ENCODE measurements at regions of chr3 and their contacts with region 1.

Region 1: DNA sequence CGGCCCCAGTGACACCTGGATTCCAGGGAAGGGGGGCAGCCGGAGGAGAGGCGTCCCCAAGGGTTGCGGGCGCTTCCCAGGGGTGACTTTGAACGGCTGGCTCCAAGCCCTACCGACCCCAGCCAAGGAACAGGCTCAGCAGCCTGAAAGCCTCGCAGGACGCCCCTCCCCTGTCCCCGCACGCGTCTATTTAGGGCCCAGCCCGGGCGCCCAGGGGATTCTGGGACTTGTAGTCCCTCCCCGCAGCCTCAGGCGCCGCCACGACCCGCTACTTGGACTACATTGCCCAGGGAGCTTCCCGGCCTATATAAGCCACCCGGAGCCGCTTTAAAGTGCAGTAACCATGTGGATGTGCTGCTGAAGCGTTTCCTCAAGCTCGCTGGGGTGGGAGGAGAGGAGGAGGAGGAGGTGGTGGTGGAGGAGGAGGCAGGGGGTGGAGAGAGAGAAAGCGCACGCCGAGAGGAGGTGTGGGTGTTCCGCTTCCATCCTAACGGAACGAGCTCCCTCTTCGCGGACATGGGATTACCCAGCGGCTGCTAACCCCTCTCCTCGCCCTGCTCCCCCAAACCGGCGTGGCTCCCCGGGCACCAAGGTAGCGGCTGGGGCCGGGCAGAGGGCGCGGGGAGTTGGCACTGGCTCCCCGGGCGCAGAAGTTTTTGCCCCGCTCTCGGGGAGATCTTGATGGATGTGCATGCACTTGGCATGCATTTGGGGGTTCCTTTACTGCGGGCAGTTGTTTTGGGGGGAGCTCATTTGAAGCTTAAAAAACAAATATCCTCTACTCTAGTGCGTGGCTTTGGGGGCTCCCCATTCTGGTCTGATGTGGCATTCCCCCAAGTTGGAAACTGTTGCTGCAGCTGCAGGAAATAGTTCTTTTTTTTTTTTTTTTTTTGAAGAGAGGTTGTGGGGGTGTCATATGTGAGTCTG is at the start of gene ITPR1:
- DNase-seq: peak; percentile 97 to 100 (median 98)
- ATAC-seq: peak; percentile 93
- H3K4me3 ChIP-seq: peak within 1 kb of the TSS; percentile 61
- H3K27ac ChIP-seq: peak within 1 kb of the TSS; percentile 52
- H3K4me1 ChIP-seq: peaks cover 17 to 25% of the 10 kb centered on the region in 2 experiments
- H3K27me3 ChIP-seq: no peaks in the 10 kb centered on the region
- CTCF ChIP-seq: peak; percentile 7 to 39 (median 17); a peak in 3 of 6 replicates
- EP300 ChIP-seq: 0 out of 2 replicates have a peak, but pooled peaks have one; percentile 3
- POLR2A ChIP-seq: peak; percentile 99
- RAD21 ChIP-seq: peak; percentile 50 to 52; a peak in 3 of 4 replicates
- polyA plus RNA-seq, gene ITPR1: 26.2 to 33.9 TPM

Region 2: GRCh38 chr3:4294616-4295327 is 198.5 kb before region 1 on chr3:
- CTCF ChIA-PET with region 1: no interaction called
- POLR2A ChIA-PET with region 1: no interaction called
- in situ Hi-C with region 1: no loop called
- intact Hi-C with region 1: no loop called
- DNase-seq: no peak
- ATAC-seq: no peak
- H3K4me3 ChIP-seq: no peak overlapping the region
- H3K27ac ChIP-seq: no peak overlapping the region
- H3K4me1 ChIP-seq: no peaks in the 10 kb centered on the region
- H3K27me3 ChIP-seq: no peaks in the 10 kb centered on the region; a peak in 1 of 5 replicates
- CTCF ChIP-seq: no peak
- EP300 ChIP-seq: no peak
- POLR2A ChIP-seq: no peak
- RAD21 ChIP-seq: no peak

Region 3: DNA sequence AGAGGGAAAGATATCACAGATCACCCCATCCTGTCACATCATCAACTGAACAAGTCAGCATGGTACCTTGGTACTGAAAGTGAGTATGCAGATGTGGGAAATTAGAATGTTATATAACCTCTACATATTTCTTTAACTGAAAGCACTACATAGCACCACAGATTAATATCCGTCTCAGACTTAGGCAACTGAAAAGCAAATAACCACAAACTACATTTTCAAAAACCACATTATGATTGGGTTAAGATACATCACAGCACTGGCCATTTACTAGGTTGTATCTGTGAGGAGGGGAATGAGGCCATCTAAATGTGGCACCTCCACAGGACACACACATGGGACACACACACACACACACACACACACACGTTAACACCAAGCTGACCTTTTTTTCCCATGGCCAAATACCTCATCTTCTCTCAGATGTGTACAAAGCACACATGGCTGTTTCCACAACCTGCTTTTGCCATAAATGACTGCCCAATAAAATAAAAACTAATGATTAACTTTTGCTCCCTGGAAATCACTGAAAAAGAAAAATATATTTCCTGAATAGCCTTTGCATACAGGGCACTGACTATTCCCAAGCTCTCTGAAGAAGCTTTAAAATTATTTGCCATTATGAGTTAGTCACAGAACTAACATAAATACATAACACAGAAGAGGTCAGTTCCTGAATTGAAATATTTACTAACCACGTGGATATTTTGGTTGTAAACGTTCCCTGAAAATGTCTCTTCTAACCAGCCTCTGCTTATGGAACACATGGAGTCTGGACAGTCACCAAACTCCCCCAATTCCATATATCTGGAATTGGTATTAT is 86.3 kb before region 1 on chr3:
- CTCF ChIA-PET with region 1: no interaction called
- POLR2A ChIA-PET with region 1: interaction called, 13 read pairs
- in situ Hi-C with region 1: no loop called
- intact Hi-C with region 1: no loop called
- DNase-seq: no peak
- ATAC-seq: no peak
- H3K4me3 ChIP-seq: no peak overlapping the region
- H3K27ac ChIP-seq: no peak overlapping the region
- H3K4me1 ChIP-seq: peaks cover 0 to 17% of the 10 kb centered on the region in 2 experiments; a peak in 2 of 5 replicates
- H3K27me3 ChIP-seq: no peaks in the 10 kb centered on the region
- CTCF ChIP-seq: no peak
- EP300 ChIP-seq: no peak
- POLR2A ChIP-seq: no peak
- RAD21 ChIP-seq: no peak

Region 4: DNA sequence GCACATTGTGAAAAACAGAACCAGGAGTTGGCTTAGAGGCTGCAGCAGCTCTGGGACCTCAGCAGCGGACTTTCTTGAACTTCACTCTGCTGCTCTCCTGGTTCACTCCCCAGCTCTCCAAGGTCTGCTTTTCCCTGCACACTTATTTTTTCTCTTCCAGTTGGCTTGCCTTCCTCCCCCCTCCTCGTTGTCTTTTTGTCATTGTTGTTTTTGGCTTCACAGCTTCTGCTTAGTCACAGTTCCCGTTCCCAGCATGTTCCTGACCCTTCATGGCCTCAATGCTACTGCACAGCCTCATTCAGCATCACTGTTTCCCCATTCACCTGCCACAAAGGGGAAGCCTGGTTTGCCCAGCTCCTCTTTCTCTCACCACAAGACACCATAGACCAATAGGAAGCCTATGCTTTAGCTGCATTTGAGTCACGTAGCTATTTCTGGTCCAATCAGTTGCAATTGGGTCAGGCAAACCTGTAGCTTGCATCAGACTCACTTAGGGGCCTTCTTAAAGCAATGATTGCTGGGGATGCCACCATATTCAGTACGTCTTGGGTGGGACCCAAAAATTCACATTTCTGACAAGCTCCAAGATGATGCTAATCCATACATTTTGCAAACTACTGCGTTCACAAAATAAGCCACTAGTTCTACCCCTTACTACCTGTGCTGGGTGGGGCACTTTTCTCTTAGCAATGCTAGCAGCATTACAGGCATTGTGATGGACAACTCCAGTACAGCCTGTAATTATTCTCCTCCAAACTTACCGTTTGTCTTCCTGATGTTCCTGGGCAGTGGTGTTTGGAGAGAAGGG is 18.4 kb before region 1 on chr3:
- CTCF ChIA-PET with region 1: no interaction called
- POLR2A ChIA-PET with region 1: interaction called, 54 read pairs
- in situ Hi-C with region 1: no loop called
- intact Hi-C with region 1: no loop called
- DNase-seq: peak in 2 of 4 experiments; percentile 42 to 63
- ATAC-seq: peak; percentile 74
- H3K4me3 ChIP-seq: no peak overlapping the region
- H3K27ac ChIP-seq: peak overlapping the region; percentile 11; the same call in 1 of the 3 replicates
- H3K4me1 ChIP-seq: peaks cover 8 to 10% of the 10 kb centered on the region in 2 experiments
- H3K27me3 ChIP-seq: peaks cover 0 to 4% of the 10 kb centered on the region in 2 experiments; a peak in 1 of 5 replicates
- CTCF ChIP-seq: no peak
- EP300 ChIP-seq: no peak
- POLR2A ChIP-seq: no peak
- RAD21 ChIP-seq: 0 out of 4 replicates have a peak, but pooled peaks of 1 of the 2 experiments have one; percentile 10

Region 5: GRCh38 chr3:4524088-4525023 is 31.1 kb after region 1 on chr3:
- CTCF ChIA-PET with region 1: no interaction called
- POLR2A ChIA-PET with region 1: interaction called, 94 read pairs
- in situ Hi-C with region 1: no loop called
- intact Hi-C with region 1: no loop called
- DNase-seq: peak in 1 of 4 experiments; percentile 59
- ATAC-seq: peak; percentile 26; the same call in 1 of the 3 replicates
- H3K4me3 ChIP-seq: no peak overlapping the region
- H3K27ac ChIP-seq: no peak overlapping the region
- H3K4me1 ChIP-seq: peaks cover 7 to 30% of the 10 kb centered on the region in 2 experiments; a peak in 4 of 5 replicates
- H3K27me3 ChIP-seq: no peaks in the 10 kb centered on the region
- CTCF ChIP-seq: no peak
- EP300 ChIP-seq: no peak
- POLR2A ChIP-seq: no peak
- RAD21 ChIP-seq: no peak

Region 6: DNA sequence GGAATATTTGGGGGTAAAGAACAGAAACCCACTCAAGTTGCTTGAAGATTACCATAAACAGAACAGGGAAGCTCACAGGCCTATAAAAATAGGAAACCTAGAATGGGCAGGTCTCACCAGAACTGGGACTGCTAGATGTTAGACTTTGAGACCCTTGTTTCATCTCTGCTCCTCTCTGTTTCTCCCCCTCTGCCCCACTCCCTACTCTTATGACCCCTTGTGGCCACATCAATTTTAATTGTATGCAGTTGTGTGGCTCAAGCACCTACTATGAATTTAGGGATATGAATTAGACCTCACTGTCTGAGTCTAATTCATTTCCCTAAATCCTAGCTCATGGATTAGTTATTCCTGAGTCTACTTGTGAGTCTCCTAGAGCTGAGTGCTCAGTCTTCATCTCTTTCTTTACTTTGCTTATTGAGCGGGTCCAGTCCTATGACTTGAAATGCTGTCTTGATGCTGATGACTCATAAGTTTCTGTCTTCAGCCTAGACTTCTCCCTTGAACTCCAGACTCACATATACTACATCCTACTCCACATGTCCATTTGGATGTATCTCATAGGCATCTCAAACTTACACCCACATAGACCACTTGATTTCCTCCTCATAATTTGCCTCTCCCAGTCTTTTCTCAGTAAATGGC is 78.5 kb after region 1 on chr3:
- CTCF ChIA-PET with region 1: no interaction called
- POLR2A ChIA-PET with region 1: interaction called, 5 read pairs
- in situ Hi-C with region 1: no loop called
- intact Hi-C with region 1: loop called (anchors 1 kb)
- DNase-seq: peak in 2 of 4 experiments; percentile 52 to 57
- ATAC-seq: peak; percentile 90
- H3K4me3 ChIP-seq: no peak overlapping the region
- H3K27ac ChIP-seq: no peak overlapping the region
- H3K4me1 ChIP-seq: peaks cover 3 to 9% of the 10 kb centered on the region in 2 experiments; a peak in 2 of 5 replicates
- H3K27me3 ChIP-seq: no peaks in the 10 kb centered on the region; a peak in 1 of 5 replicates
- CTCF ChIP-seq: peak; percentile 56 to 62 (median 57); a peak in 5 of 6 replicates
- EP300 ChIP-seq: no peak
- POLR2A ChIP-seq: no peak
- RAD21 ChIP-seq: peak; percentile 51 to 83; a peak in 3 of 4 replicates